ENCODE measurements at regions of chr7 and their contacts with region 1.

Region 1: GRCh38 chr7:18320971-18321567 is 174.5 kb upstream of the HDAC9 start:
- DNase-seq: no peak
- H3K4me3 Mint-ChIP-seq: no peak overlapping the region
- H3K27ac Mint-ChIP-seq: no peak overlapping the region
- H3K4me1 Mint-ChIP-seq: no peaks in the 10 kb centered on the region
- H3K27me3 Mint-ChIP-seq: peaks cover 3% of the 10 kb centered on the region

Region 2: GRCh38 chr7:17680943-17681351 is 640.1 kb before region 1 on chr7:
- CTCF ChIA-PET with region 1: no interaction called
- intact Hi-C with region 1: loop called (anchors 5 kb)
- DNase-seq: no peak
- H3K4me3 Mint-ChIP-seq: no peak overlapping the region
- H3K27ac Mint-ChIP-seq: peak overlapping the region; percentile 9
- H3K4me1 Mint-ChIP-seq: no peaks in the 10 kb centered on the region
- H3K27me3 Mint-ChIP-seq: no peaks in the 10 kb centered on the region

Region 3: GRCh38 chr7:17706734-17707133 is 614.3 kb before region 1 on chr7:
- CTCF ChIA-PET with region 1: no interaction called
- intact Hi-C with region 1: loop called (anchors 1 kb)
- DNase-seq: peak; percentile 61
- H3K4me3 Mint-ChIP-seq: no peak overlapping the region
- H3K27ac Mint-ChIP-seq: no peak overlapping the region
- H3K4me1 Mint-ChIP-seq: no peaks in the 10 kb centered on the region
- H3K27me3 Mint-ChIP-seq: no peaks in the 10 kb centered on the region

Region 4: GRCh38 chr7:18064242-18064838 is 256.7 kb before region 1 on chr7:
- CTCF ChIA-PET with region 1: interaction called, 3 read pairs
- intact Hi-C with region 1: loop called (anchors 2 kb)
- DNase-seq: peak; percentile 27
- H3K4me3 Mint-ChIP-seq: no peak overlapping the region
- H3K27ac Mint-ChIP-seq: no peak overlapping the region
- H3K4me1 Mint-ChIP-seq: no peaks in the 10 kb centered on the region
- H3K27me3 Mint-ChIP-seq: no peaks in the 10 kb centered on the region

Region 5: GRCh38 chr7:18216270-18216669 is 104.8 kb before region 1 on chr7:
- CTCF ChIA-PET with region 1: interaction called, 4 read pairs
- intact Hi-C with region 1: loop called (anchors 5 kb)
- DNase-seq: no peak
- H3K4me3 Mint-ChIP-seq: no peak overlapping the region
- H3K27ac Mint-ChIP-seq: no peak overlapping the region
- H3K4me1 Mint-ChIP-seq: no peaks in the 10 kb centered on the region
- H3K27me3 Mint-ChIP-seq: no peaks in the 10 kb centered on the region

Region 6: GRCh38 chr7:18390535-18390907 is 69.5 kb after region 1 on chr7:
- CTCF ChIA-PET with region 1: no interaction called
- intact Hi-C with region 1: no loop called
- DNase-seq: no peak
- H3K4me3 Mint-ChIP-seq: no peak overlapping the region
- H3K27ac Mint-ChIP-seq: no peak overlapping the region
- H3K4me1 Mint-ChIP-seq: no peaks in the 10 kb centered on the region
- H3K27me3 Mint-ChIP-seq: peaks cover 3% of the 10 kb centered on the region

Region 7: DNA sequence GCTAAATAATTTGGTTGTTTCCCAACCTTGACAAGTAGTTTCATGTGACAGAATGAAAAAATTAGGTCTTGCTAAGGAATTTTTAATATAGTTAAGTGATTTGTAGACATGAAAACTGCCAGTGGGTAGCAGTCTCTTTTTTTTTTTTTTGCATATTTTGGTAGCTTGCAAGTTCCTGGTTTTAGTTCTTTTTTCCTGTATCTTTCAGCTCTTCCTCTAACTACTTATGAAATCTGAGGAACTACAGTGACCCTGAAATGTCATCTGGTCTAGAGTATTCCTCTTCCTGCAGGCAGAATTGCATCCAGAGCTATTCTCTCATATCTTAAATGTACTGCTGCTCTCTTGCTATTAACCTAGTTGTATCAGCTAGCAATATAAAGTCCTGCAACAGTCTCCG is 334.8 kb after region 1 on chr7:
- CTCF ChIA-PET with region 1: no interaction called
- intact Hi-C with region 1: no loop called
- DNase-seq: no peak
- H3K4me3 Mint-ChIP-seq: no peak overlapping the region
- H3K27ac Mint-ChIP-seq: no peak overlapping the region
- H3K4me1 Mint-ChIP-seq: no peaks in the 10 kb centered on the region
- H3K27me3 Mint-ChIP-seq: no peaks in the 10 kb centered on the region

Measured in activated naive CD4-positive, alpha-beta T cell treated with anti-CD3 and anti-CD28 coated beads for 36 hours (primary cell).